Mammary epithelial cell (primary cell): ENCODE measurements at regions of chr13 and their contacts with region 1.

Region 1: GRCh38 chr13:110915057-110915873 is at the start of gene ANKRD10:
- DNase-seq: peak; percentile 99
- H3K4me3 ChIP-seq: peak within 1 kb of the TSS; percentile 62 to 100 (median 77)
- H3K27ac ChIP-seq: peak within 1 kb of the TSS; percentile 95
- H3K4me1 ChIP-seq: peaks cover 35% of the 10 kb centered on the region
- H3K27me3 ChIP-seq: no peaks in the 10 kb centered on the region
- CTCF ChIP-seq: peak; percentile 53 to 78
- total RNA-seq, gene ANKRD10: 45.3 to 50.3 TPM

Region 2: GRCh38 chr13:110593430-110594130 is 321.7 kb before region 1 on chr13:
- CTCF ChIA-PET with region 1: no interaction called
- dilution Hi-C with region 1: no loop called
- in situ Hi-C with region 1: no loop called
- intact Hi-C with region 1: loop called (anchors 5 kb)
- DNase-seq: peak; percentile 39
- H3K4me3 ChIP-seq: no peak overlapping the region
- H3K27ac ChIP-seq: no peak overlapping the region
- H3K4me1 ChIP-seq: peaks cover 16% of the 10 kb centered on the region
- H3K27me3 ChIP-seq: no peaks in the 10 kb centered on the region
- CTCF ChIP-seq: peak; percentile 51 to 61

Region 3: GRCh38 chr13:110869805-110870706 is 45.2 kb before region 1 on chr13:
- CTCF ChIA-PET with region 1: no interaction called
- dilution Hi-C with region 1: no loop called
- in situ Hi-C with region 1: no loop called
- intact Hi-C with region 1: loop called (anchors 1 kb)
- DNase-seq: peak; percentile 100
- H3K4me3 ChIP-seq: peak overlapping the region; percentile 13 to 32 (median 20)
- H3K27ac ChIP-seq: peak overlapping the region; percentile 72
- H3K4me1 ChIP-seq: peaks cover 15% of the 10 kb centered on the region
- H3K27me3 ChIP-seq: no peaks in the 10 kb centered on the region
- CTCF ChIP-seq: no peak

Region 4: GRCh38 chr13:111049802-111050538 is 134.7 kb after region 1 on chr13:
- CTCF ChIA-PET with region 1: no interaction called
- dilution Hi-C with region 1: no loop called
- in situ Hi-C with region 1: no loop called
- intact Hi-C with region 1: loop called (anchors 1 kb)
- DNase-seq: no peak
- H3K4me3 ChIP-seq: no peak overlapping the region
- H3K27ac ChIP-seq: no peak overlapping the region
- H3K4me1 ChIP-seq: no peaks in the 10 kb centered on the region
- H3K27me3 ChIP-seq: no peaks in the 10 kb centered on the region
- CTCF ChIP-seq: peak; percentile 30 to 56

Region 5: DNA sequence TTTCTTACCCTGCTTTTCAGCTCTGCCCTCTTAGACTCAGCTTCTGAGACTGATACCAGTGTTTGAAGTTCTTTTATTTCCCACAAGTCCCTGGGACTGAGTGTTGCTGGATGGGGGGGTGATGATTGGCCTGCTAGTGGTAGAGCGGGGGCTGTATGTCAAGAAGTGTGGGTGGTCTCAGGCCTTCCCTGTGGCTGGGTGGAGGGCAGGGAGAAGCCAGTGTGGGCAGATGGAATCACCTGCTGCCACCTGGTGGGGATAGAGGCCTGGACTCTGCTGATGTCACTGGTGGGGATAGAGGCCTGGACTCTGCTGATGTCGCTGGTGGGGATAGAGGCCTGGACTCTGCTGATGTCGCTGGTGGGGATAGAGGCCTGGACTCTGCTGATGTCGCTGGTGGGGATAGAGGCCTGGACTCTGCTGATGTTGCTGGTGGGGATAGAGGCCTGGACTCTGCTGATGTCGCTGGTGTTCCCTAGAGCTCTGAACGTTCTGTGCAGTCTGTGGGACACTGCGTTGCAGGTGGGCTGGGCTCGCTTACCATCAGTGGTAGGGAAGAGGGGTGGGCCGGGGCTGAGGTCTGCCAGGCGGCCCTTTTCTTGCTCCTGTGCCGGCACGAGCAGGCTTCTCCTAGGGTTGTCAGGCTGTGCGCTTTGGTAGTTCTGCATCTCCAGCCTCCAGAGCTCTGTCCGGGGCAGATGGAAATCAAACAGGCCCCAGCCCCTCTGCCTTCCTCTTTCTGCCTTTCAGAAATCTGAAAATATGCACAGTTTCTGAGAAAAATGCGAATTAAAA is 301.1 kb after region 1 on chr13:
- CTCF ChIA-PET with region 1: no interaction called
- dilution Hi-C with region 1: no loop called
- in situ Hi-C with region 1: loop called in 1 of 2 experiments (anchors 25 kb)
- intact Hi-C with region 1: loop called (anchors 10 kb)
- DNase-seq: no peak
- H3K4me3 ChIP-seq: no peak overlapping the region
- H3K27ac ChIP-seq: no peak overlapping the region
- H3K4me1 ChIP-seq: no peaks in the 10 kb centered on the region
- H3K27me3 ChIP-seq: no peaks in the 10 kb centered on the region
- CTCF ChIP-seq: peak; percentile 36 to 64